H1 (cell line): ENCODE measurements at regions of chr1 and their contacts with region 1.

Region 1: DNA sequence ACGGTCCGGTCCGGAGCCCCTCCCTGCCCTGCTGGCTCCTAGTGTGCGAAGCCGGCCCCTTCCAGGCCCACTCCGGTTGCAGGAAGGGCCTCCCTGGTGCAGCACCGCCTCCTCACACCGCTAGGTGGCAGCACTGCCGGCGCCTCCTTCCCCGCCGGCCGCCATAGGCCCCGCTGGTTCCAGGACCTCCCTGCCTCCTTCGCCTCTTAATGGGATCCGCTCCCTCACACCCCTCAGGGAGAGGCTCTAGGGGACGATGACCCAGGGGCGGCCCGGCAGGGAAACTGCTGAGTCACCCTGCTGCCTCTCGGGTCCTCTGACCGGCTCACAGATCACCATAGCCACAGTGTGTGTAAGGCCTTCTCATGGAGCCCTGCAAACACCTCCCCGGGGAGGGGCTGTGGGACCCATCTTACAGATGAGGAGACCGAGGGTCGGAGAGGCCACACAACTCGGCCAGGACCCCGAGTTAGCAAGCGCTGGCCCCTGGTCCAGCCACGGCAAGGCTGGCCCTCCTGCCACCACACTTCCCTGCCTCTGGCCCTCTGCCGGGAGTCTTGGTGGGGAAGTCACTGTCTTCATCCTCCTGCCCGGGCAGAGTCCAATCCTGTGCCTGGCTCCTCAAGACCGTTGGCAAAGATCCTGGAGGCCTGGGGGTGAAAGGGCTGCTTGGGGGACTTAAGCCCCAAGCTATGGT is 1.6 kb upstream of the AJAP1 start:
- DNase-seq: peak in 1 of 2 experiments; percentile 91
- H3K4me3 ChIP-seq: no peak overlapping the region
- H3K27ac ChIP-seq: no peak overlapping the region
- H3K4me1 ChIP-seq: peaks cover 13 to 26% (median 15%) of the 10 kb centered on the region in 4 experiments
- H3K27me3 ChIP-seq: peaks cover 28 to 48% (median 46%) of the 10 kb centered on the region in 4 experiments
- CTCF ChIP-seq: peak; percentile 78 to 97 (median 82)
- EP300 ChIP-seq: no peak
- POLR2A ChIP-seq: no peak
- RAD21 ChIP-seq: peak; percentile 62 to 67

Region 2: GRCh38 chr1:4668864-4669700 is 16.3 kb after region 1 on chr1:
- CTCF ChIA-PET with region 1: interaction called, 30 read pairs
- POLR2A ChIA-PET with region 1: no interaction called
- DNase-seq: no peak
- H3K4me3 ChIP-seq: no peak overlapping the region
- H3K27ac ChIP-seq: no peak overlapping the region
- H3K4me1 ChIP-seq: peaks cover 0 to 3% (median 0%) of the 10 kb centered on the region in 4 experiments; a peak in 1 of 7 replicates
- H3K27me3 ChIP-seq: no peaks in the 10 kb centered on the region; a peak in 1 of 7 replicates
- CTCF ChIP-seq: no peak
- EP300 ChIP-seq: no peak
- POLR2A ChIP-seq: no peak
- RAD21 ChIP-seq: no peak

Region 3: DNA sequence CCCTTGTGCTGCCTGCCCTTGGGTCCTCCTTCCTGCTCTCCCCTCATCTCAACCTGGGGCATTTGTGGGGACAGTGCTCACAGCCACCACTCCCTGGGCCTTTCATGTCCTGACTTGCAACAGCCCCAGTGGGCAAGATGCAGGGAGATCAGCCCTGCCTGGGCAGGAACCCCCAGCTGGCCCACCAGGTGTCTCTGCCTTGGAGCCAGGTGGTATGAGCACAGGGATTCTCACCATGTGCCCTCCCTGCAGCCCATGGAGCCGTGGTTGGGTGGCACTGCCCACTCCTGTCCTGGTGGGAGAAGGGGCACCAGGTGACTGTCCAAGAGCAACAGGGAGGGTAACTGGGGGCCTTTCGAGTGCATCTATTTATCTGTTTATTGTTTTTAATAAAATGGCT is 102.0 kb after region 1 on chr1:
- CTCF ChIA-PET with region 1: interaction called, 10 read pairs
- POLR2A ChIA-PET with region 1: no interaction called
- DNase-seq: peak in 1 of 2 experiments; percentile 55
- H3K4me3 ChIP-seq: peak overlapping the region in 1 of 4 experiments; percentile 14; a peak in 1 of 8 replicates
- H3K27ac ChIP-seq: 0 out of 2 replicates have a peak overlapping the region, but pooled peaks have one; percentile 7
- H3K4me1 ChIP-seq: peaks cover 10 to 26% (median 17%) of the 10 kb centered on the region in 4 experiments
- H3K27me3 ChIP-seq: peaks cover 0 to 4% (median 0%) of the 10 kb centered on the region in 4 experiments; a peak in 1 of 7 replicates
- CTCF ChIP-seq: no peak
- EP300 ChIP-seq: no peak
- POLR2A ChIP-seq: no peak
- RAD21 ChIP-seq: no peak

Region 4: GRCh38 chr1:4768553-4768952 is 115.8 kb after region 1 on chr1:
- CTCF ChIA-PET with region 1: interaction called, 18 read pairs
- POLR2A ChIA-PET with region 1: no interaction called
- DNase-seq: no peak
- H3K4me3 ChIP-seq: no peak overlapping the region
- H3K27ac ChIP-seq: no peak overlapping the region
- H3K4me1 ChIP-seq: no peaks in the 10 kb centered on the region; a peak in 1 of 7 replicates
- H3K27me3 ChIP-seq: no peaks in the 10 kb centered on the region; a peak in 1 of 7 replicates
- CTCF ChIP-seq: peak in 2 of 3 experiments; percentile 22 to 30; a peak in 3 of 4 replicates
- EP300 ChIP-seq: no peak
- POLR2A ChIP-seq: no peak
- RAD21 ChIP-seq: no peak; a peak in 1 of 4 replicates

Region 5: GRCh38 chr1:4778056-4778455 is 125.3 kb after region 1 on chr1:
- CTCF ChIA-PET with region 1: interaction called, 50 read pairs
- POLR2A ChIA-PET with region 1: no interaction called
- DNase-seq: peak in 1 of 2 experiments; percentile 58
- H3K4me3 ChIP-seq: no peak overlapping the region
- H3K27ac ChIP-seq: no peak overlapping the region
- H3K4me1 ChIP-seq: no peaks in the 10 kb centered on the region; a peak in 1 of 7 replicates
- H3K27me3 ChIP-seq: no peaks in the 10 kb centered on the region
- CTCF ChIP-seq: peak; percentile 59 to 68 (median 64)
- EP300 ChIP-seq: no peak
- POLR2A ChIP-seq: no peak
- RAD21 ChIP-seq: peak; percentile 60 to 74

Region 6: GRCh38 chr1:4825800-4826450 is 173.1 kb after region 1 on chr1:
- CTCF ChIA-PET with region 1: interaction called, 51 read pairs
- POLR2A ChIA-PET with region 1: no interaction called
- DNase-seq: peak in 1 of 2 experiments; percentile 7
- H3K4me3 ChIP-seq: no peak overlapping the region
- H3K27ac ChIP-seq: no peak overlapping the region
- H3K4me1 ChIP-seq: peaks cover 0 to 3% (median 2%) of the 10 kb centered on the region in 4 experiments; a peak in 2 of 7 replicates
- H3K27me3 ChIP-seq: no peaks in the 10 kb centered on the region
- CTCF ChIP-seq: peak; percentile 10 to 89 (median 82)
- EP300 ChIP-seq: no peak
- POLR2A ChIP-seq: no peak
- RAD21 ChIP-seq: peak; percentile 88 to 92